Activated CD4-positive, alpha-beta T cell treated with anti-CD3 and anti-CD28 coated beads for 36 hours (primary cell): ENCODE measurements at regions of chr2 and their contacts with region 1.

Region 1: DNA sequence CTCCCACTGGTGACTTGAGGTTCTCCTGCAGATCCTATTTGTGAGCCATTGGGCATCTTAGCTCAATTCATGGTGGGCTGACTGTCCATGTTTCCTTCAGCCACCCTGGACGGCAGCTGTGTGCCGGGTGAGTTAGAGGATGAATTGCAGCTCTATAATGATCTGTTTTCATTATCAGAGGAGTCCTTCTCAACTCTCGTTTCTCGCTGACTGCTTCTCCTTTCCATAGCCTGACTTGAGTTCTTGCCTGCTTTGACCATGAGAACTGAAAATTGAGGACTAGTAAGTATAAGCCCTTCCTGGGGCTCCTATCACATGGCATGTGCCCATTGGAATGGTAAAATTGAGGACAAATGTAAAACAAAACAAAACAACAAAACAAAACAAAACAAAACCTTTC is 121.8 kb downstream of the CDC42EP3 start:
- DNase-seq: no peak
- ATAC-seq: no peak
- H3K4me3 Mint-ChIP-seq: no peak overlapping the region
- H3K27ac Mint-ChIP-seq: no peak overlapping the region
- H3K4me1 Mint-ChIP-seq: peaks cover 11% of the 10 kb centered on the region
- H3K27me3 Mint-ChIP-seq: no peaks in the 10 kb centered on the region

Region 2: GRCh38 chr2:37537316-37537715 is 12.3 kb before region 1 on chr2:
- CTCF ChIA-PET with region 1: interaction called, 18 read pairs
- POLR2A ChIA-PET with region 1: no interaction called
- intact Hi-C with region 1: no loop called
- DNase-seq: no peak
- ATAC-seq: no peak
- H3K4me3 Mint-ChIP-seq: no peak overlapping the region
- H3K27ac Mint-ChIP-seq: no peak overlapping the region
- H3K4me1 Mint-ChIP-seq: peaks cover 2% of the 10 kb centered on the region
- H3K27me3 Mint-ChIP-seq: no peaks in the 10 kb centered on the region

Region 3: DNA sequence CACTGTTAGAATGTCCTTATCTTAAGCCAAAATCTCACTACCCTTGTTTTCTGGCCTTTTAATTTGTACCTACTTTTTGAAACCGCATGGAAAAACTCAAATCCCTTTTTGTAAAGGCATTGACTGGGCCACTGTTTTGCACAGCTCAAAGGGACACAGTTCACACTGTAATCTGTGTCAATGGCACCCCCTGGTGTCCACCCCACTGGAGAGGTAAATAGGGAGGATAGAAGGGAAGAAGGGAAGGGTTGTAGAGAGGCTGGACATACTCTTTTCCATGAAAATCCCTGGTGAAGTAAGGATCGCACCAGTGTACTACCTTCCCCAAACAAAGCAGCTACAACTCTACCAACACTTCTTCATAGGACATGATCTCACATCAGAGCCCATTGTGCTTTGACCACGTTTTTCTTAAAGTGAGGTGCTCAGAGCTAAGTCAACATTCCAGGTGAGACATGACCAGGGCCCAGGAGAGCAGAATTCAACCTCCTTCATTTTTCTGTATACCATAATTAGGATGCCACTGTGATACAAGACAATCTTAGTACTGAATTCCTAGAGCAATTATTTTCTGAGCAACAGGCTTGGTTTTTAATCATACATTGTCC is 283.1 kb after region 1 on chr2:
- CTCF ChIA-PET with region 1: no interaction called
- POLR2A ChIA-PET with region 1: no interaction called
- intact Hi-C with region 1: loop called (anchors 1 to 5 kb)
- DNase-seq: peak; percentile 90
- ATAC-seq: peak; percentile 76
- H3K4me3 Mint-ChIP-seq: no peak overlapping the region
- H3K27ac Mint-ChIP-seq: peak overlapping the region; percentile 32
- H3K4me1 Mint-ChIP-seq: peaks cover 22% of the 10 kb centered on the region
- H3K27me3 Mint-ChIP-seq: no peaks in the 10 kb centered on the region

Region 4: DNA sequence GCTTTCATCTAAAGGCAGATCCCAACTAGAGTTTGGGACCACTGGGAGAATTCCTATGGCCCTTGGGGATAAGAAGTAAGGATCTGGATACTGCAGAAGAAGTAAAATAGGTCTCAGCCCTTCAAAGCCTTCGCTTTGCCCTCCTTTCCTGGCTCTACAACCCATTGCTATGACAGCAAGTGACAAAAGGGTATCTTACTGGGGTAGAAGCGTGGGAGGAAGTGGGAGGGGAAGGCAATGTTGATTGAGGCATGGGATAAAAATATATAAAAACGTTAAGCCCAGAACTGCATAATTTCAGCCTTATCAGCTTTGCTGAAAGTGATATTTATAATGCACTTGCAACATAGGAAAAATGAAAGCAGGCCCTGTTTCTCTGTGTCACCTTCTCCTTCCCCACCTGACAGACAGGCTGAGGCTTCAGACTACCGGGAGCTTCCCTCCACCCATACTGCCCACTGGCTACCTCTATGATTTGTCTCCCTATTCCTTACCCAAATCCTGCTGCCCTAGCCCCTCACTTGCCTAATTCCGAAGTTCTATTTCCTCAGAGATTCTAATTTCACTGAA is 1586.2 kb after region 1 on chr2:
- CTCF ChIA-PET with region 1: no interaction called
- POLR2A ChIA-PET with region 1: no interaction called
- intact Hi-C with region 1: no loop called
- DNase-seq: no peak
- ATAC-seq: peak; percentile 50
- H3K4me3 Mint-ChIP-seq: peak overlapping the region; percentile 18
- H3K27ac Mint-ChIP-seq: peak overlapping the region; percentile 34
- H3K4me1 Mint-ChIP-seq: peaks cover 39% of the 10 kb centered on the region
- H3K27me3 Mint-ChIP-seq: peaks cover 2% of the 10 kb centered on the region